H1 (cell line): ENCODE measurements at regions of chr19 and their contacts with region 1.

Region 1: DNA sequence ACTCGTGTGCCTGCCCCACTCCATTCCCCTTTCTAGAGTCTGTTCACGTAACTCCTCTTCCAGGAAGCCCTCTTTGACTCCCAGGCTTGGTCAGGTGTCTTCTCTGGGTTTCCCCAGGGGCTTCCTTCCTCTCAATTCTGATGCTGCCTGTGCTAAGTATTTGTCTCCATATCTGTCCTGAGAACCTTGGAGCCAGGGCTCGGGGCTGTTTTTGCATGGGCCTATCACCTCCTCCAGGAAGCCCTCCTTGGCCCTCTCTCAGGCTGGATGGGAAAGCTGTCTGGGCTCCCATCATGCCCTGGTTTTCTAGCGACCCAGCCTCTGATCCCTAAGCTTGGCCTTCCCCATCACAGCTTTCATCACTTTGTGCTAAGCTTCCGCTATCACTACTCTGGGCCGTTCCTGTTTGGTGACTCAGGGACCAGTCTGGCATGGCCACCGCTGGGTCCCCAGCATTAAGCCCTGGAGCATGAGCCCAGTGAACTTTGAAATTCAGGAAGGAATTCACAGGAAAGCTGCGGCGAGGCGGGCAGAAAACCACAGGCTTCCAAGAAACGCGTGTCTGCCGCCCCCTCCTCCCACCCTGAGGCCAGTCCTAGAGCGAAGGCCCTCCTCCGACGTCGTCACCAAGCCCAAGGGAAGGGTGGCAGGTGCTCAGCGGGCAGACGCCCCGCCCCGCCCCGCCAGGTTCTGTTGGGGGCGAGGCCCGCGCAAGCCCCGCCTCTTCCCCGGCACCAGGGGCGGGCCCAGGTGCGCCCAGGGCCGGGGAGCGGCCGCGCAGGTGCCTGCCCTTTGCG is 486 bp upstream of the SPINT2 start:
- DNase-seq: peak in 1 of 2 experiments; percentile 80
- H3K4me3 ChIP-seq: peak overlapping the region; percentile 84 to 89 (median 85); a peak in 6 of 8 replicates
- H3K27ac ChIP-seq: peak overlapping the region; percentile 94
- H3K4me1 ChIP-seq: peaks cover 12 to 34% (median 19%) of the 10 kb centered on the region in 4 experiments
- H3K27me3 ChIP-seq: no peaks in the 10 kb centered on the region
- CTCF ChIP-seq: no peak
- EP300 ChIP-seq: no peak
- POLR2A ChIP-seq: no peak
- RAD21 ChIP-seq: no peak

Region 2: DNA sequence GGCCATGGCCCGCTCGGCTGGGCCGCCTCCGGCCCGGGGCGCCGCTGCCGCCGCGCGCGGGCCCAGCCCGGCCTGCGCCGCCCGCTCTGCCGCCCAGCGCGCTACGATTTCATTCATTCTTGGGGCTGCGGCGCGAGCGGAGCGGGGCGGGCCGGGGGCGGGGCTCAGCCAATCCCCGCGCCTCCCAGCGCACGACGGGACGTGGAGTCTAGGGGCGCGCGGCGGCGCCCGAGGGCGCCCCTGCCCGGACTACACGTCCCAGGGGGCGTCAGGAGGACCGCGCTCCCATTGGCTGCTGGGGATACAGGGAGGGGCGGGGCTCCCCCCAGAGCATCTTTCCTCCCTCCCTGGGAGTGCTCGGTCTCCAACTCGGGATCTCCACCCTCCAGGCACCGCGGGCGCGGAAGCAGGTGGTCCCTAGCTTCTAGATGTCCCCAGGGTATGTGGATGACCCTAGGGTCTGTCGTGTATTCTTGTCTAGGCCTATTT is 34.3 kb before region 1 on chr19:
- CTCF ChIA-PET with region 1: interaction called, 25 read pairs
- POLR2A ChIA-PET with region 1: interaction called, 5 read pairs
- DNase-seq: peak in 1 of 2 experiments; percentile 85
- H3K4me3 ChIP-seq: peak overlapping the region; percentile 5 to 86 (median 40); a peak in 5 of 8 replicates
- H3K27ac ChIP-seq: no peak overlapping the region
- H3K4me1 ChIP-seq: peaks cover 6 to 19% (median 13%) of the 10 kb centered on the region in 4 experiments
- H3K27me3 ChIP-seq: peaks cover 0 to 10% (median 5%) of the 10 kb centered on the region in 4 experiments; a peak in 3 of 7 replicates
- CTCF ChIP-seq: no peak
- EP300 ChIP-seq: no peak
- POLR2A ChIP-seq: no peak
- RAD21 ChIP-seq: no peak

Region 3: GRCh38 chr19:38250821-38251563 is 12.9 kb before region 1 on chr19:
- CTCF ChIA-PET with region 1: interaction called, 124 read pairs
- POLR2A ChIA-PET with region 1: interaction called, 20 read pairs
- DNase-seq: peak in 1 of 2 experiments; percentile 70
- H3K4me3 ChIP-seq: peak overlapping the region in 3 of 4 experiments; percentile 4 to 50 (median 14); a peak in 5 of 8 replicates
- H3K27ac ChIP-seq: no peak overlapping the region
- H3K4me1 ChIP-seq: peaks cover 10 to 39% (median 24%) of the 10 kb centered on the region in 4 experiments
- H3K27me3 ChIP-seq: peaks cover 0 to 9% (median 8%) of the 10 kb centered on the region in 4 experiments; a peak in 4 of 7 replicates
- CTCF ChIP-seq: no peak
- EP300 ChIP-seq: no peak
- POLR2A ChIP-seq: no peak
- RAD21 ChIP-seq: no peak

Region 4: DNA sequence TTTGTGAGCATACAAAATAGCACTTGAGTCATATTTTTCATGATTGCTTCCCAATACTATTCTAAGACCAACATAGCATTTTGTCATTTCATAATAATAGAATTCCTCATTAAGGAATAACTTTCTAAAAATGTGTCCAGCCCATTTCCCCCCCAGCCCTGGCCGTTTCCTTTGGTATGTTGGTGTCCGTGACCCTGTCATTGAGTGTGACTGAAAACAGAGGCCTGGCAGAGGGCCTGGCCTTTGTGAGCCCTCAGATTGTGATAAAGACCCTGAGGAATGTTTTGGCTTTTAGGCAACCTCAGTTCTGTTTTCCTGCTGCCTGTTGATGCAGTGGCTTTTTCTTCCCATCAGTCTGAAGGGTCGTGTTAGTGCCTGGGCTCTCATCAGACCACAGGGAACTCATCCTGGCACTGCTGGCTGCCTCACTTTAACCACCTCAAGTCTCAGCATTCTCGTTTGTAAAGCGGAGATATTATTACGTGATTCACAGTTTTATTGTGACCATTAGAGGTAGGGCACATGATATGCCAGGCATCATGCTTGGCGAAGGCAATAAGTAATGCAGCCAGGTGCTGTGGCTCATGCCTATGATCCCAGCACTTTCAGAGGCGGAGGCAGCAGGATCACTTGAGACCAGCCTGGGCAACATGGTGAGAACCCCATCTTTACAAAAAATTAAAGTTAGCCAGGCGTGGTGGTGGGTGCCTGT is 14.2 kb after region 1 on chr19:
- CTCF ChIA-PET with region 1: interaction called, 12 read pairs
- POLR2A ChIA-PET with region 1: interaction called, 25 read pairs
- DNase-seq: no peak
- H3K4me3 ChIP-seq: no peak overlapping the region
- H3K27ac ChIP-seq: no peak overlapping the region
- H3K4me1 ChIP-seq: no peaks in the 10 kb centered on the region; a peak in 1 of 7 replicates
- H3K27me3 ChIP-seq: no peaks in the 10 kb centered on the region
- CTCF ChIP-seq: no peak
- EP300 ChIP-seq: no peak
- POLR2A ChIP-seq: no peak
- RAD21 ChIP-seq: no peak

Region 5: GRCh38 chr19:38284422-38284821 is 20.5 kb after region 1 on chr19:
- CTCF ChIA-PET with region 1: interaction called, 12 read pairs
- POLR2A ChIA-PET with region 1: interaction called, 12 read pairs
- DNase-seq: no peak
- H3K4me3 ChIP-seq: no peak overlapping the region
- H3K27ac ChIP-seq: no peak overlapping the region
- H3K4me1 ChIP-seq: no peaks in the 10 kb centered on the region
- H3K27me3 ChIP-seq: no peaks in the 10 kb centered on the region
- CTCF ChIP-seq: no peak
- EP300 ChIP-seq: no peak
- POLR2A ChIP-seq: no peak
- RAD21 ChIP-seq: no peak

Region 6: GRCh38 chr19:38304866-38305429 is 41.1 kb after region 1 on chr19:
- CTCF ChIA-PET with region 1: interaction called, 13 read pairs
- POLR2A ChIA-PET with region 1: interaction called, 3 read pairs
- DNase-seq: peak; percentile 83 to 85
- H3K4me3 ChIP-seq: peak overlapping the region; percentile 29 to 59 (median 50)
- H3K27ac ChIP-seq: 0 out of 2 replicates have a peak overlapping the region, but pooled peaks have one; percentile 37
- H3K4me1 ChIP-seq: peaks cover 2 to 14% (median 6%) of the 10 kb centered on the region in 4 experiments; a peak in 6 of 7 replicates
- H3K27me3 ChIP-seq: no peaks in the 10 kb centered on the region; a peak in 2 of 7 replicates
- CTCF ChIP-seq: no peak
- EP300 ChIP-seq: no peak
- POLR2A ChIP-seq: no peak
- RAD21 ChIP-seq: no peak